ENCODE measurements at regions of chr19 and their contacts with region 1.

Region 1: DNA sequence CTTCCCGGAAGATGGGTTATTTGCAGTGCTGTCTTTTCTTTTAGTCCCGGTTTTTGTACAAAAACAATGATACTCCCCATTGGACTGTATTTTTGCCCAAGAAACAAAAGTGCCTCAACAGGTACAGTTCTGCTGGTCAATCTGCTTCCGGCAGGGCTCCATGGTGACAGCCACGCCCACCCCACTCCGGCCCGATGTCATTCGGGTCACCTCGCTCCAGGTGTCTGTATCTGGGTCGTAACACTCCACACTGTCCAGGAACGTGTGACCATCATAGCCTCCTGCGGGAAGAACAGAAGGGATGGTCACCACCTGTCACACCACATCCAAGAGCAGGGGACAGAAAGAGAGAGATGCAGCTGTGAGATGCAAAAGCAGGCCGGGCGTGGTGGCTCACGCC is 16.6 kb downstream of the KEAP1 start:
- DNase-seq: no peak
- ATAC-seq: peak; percentile 23
- H3K4me3 ChIP-seq: no peak overlapping the region
- H3K27ac ChIP-seq: peak overlapping the region; percentile 67
- H3K4me1 ChIP-seq: peaks cover 28% of the 10 kb centered on the region
- H3K27me3 ChIP-seq: no peaks in the 10 kb centered on the region
- CTCF ChIP-seq: no peak
- EP300 ChIP-seq: no peak
- POLR2A ChIP-seq: no peak
- RAD21 ChIP-seq: no peak

Region 2: GRCh38 chr19:10471909-10472308 is 14.6 kb before region 1 on chr19:
- CTCF ChIA-PET with region 1: no interaction called
- POLR2A ChIA-PET with region 1: no interaction called
- in situ Hi-C with region 1: no loop called
- intact Hi-C with region 1: no loop called
- DNase-seq: peak; percentile 54
- ATAC-seq: peak; percentile 70
- H3K4me3 ChIP-seq: no peak overlapping the region
- H3K27ac ChIP-seq: no peak overlapping the region
- H3K4me1 ChIP-seq: no peaks in the 10 kb centered on the region
- H3K27me3 ChIP-seq: no peaks in the 10 kb centered on the region
- CTCF ChIP-seq: peak; percentile 46; the same call in 1 of the 2 replicates
- EP300 ChIP-seq: no peak
- POLR2A ChIP-seq: no peak
- RAD21 ChIP-seq: no peak

Region 3: DNA sequence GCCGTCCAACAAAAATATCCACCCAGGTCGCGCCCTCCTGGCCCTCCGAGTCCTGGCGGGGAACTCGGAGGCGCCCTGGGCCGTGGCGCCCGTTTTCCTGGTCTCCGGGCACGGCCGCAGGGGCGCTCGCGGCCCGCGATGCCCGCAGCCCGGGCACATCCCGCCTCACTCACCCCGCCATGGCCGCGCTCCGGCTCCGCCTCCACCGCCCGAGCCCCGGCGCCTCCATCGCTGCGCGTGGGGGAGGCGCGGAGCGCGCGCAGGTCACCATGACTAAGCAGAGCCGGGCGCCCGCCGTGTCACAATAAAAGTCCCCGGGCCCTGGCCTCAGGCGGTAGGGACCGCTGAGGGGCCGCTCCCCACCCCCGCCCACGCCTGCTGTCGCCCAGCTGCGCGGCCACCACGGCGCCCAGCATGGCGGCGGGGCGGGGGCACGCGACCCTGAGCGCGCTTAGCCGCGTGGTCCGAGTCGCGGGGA is 16.0 kb after region 1 on chr19:
- CTCF ChIA-PET with region 1: no interaction called
- POLR2A ChIA-PET with region 1: no interaction called
- in situ Hi-C with region 1: no loop called
- intact Hi-C with region 1: loop called (anchors 2 kb)
- DNase-seq: peak; percentile 83
- ATAC-seq: peak; percentile 91
- H3K4me3 ChIP-seq: peak overlapping the region; percentile 88 to 97 (median 94)
- H3K27ac ChIP-seq: peak overlapping the region; percentile 97
- H3K4me1 ChIP-seq: peaks cover 51% of the 10 kb centered on the region
- H3K27me3 ChIP-seq: no peaks in the 10 kb centered on the region
- CTCF ChIP-seq: peak; percentile 8; the same call in 1 of the 2 replicates
- EP300 ChIP-seq: peak; percentile 67 to 78
- POLR2A ChIP-seq: peak; percentile 64 to 79
- RAD21 ChIP-seq: peak; percentile 18; the same call in 1 of the 2 replicates

Measured in HepG2 (cell line).